GM12878 (cell line): ENCODE measurements at regions of chr18 and their contacts with region 1.

Region 1: GRCh38 chr18:78542204-78542603 is 437.4 kb upstream of the SALL3 start:
- DNase-seq: no peak
- ATAC-seq: no peak
- H3K4me3 ChIP-seq: no peak overlapping the region
- H3K27ac ChIP-seq: no peak overlapping the region
- H3K4me1 ChIP-seq: no peaks in the 10 kb centered on the region
- H3K27me3 ChIP-seq: no peaks in the 10 kb centered on the region
- CTCF ChIP-seq: no peak
- EP300 ChIP-seq: no peak
- POLR2A ChIP-seq: no peak
- RAD21 ChIP-seq: no peak

Region 2: DNA sequence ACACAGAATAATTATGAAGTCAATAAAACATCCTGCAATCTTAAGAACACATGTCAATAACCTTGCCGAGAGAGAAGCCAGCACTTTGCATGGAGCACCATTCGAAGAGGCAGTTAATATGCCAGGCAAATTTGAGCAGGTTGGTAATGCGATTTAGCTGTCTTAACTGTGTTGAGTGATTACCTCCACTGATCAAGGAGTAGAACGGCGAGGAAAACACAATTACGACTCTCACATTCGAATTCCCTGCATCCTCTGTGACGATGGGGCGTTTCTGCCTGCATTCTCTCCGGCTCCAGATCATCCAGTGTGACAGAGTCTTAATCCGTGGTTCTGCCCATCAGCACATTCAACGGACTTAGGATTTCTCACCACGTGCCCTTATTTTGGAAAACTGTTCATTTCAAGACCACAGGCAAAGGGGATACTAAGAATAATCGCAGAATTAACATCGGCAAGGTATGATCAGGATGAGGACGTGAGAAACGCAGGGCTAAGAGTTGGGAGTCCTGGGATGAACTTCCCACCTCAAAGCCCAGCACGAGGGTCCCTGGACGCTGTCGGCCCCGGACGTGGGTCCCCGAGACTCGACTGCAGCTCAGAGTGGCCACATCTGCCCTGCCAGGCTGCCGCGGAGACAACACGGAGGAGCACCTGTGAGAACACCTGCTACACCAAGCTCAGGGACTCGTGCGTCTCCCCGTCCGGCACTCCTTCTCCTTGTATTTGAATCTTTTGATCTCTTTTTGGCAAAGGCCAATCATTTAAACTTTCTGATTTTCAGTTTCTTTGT is 61.7 kb before region 1 on chr18:
- CTCF ChIA-PET with region 1: no interaction called
- POLR2A ChIA-PET with region 1: no interaction called
- RAD21 ChIA-PET with region 1: no interaction called
- SMC1A ChIA-PET with region 1: no interaction called
- in situ Hi-C with region 1: no loop called
- intact Hi-C with region 1: no loop called
- DNase-seq: no peak
- ATAC-seq: no peak
- H3K4me3 ChIP-seq: no peak overlapping the region
- H3K27ac ChIP-seq: no peak overlapping the region
- H3K4me1 ChIP-seq: no peaks in the 10 kb centered on the region
- H3K27me3 ChIP-seq: no peaks in the 10 kb centered on the region
- CTCF ChIP-seq: no peak
- EP300 ChIP-seq: no peak
- POLR2A ChIP-seq: no peak
- RAD21 ChIP-seq: no peak

Region 3: DNA sequence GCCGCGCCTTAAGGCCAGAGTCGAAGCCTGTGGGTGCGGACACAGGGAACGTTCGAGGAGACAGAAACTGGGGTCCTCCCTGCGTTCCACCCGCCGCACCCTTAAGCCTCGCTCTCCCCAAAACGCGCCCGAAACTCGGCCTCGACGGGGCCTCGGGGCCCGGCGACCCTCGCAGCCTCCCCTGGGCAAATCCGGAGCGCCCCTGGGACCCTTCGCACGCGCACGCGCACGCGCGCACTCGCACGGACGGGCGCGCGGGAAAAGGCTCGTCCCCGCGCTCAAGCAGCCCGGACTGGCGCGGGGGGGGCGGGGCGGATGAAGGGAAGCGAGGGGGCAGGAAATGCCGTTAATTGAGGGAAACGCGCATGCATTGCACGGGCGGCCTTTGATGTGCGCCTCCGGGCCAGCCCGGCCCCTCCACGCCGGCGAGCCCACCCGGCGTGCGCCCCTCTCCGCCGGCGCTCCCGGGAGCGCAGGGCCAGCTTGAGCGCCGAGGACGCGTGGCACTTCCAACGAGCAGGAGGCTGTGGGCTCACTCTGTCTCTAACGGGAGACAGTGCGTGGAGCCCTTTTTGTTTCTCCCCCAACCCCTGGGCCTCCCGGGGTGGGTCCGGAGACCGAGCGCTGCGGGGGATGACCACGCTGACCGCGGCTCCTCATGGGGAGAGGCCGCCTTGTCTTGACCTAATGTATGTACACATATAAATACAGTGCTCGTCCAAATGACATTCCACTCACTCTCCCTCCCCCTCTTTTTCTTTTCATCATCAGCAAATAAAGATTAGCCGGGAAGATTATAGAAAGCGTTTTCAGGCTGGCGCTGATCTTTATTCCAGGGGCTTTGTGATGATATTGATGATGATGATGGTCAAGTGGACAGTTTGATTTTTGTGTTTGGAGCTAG is 432.2 kb after region 1 on chr18:
- CTCF ChIA-PET with region 1: no interaction called
- POLR2A ChIA-PET with region 1: no interaction called
- RAD21 ChIA-PET with region 1: no interaction called
- SMC1A ChIA-PET with region 1: no interaction called
- in situ Hi-C with region 1: loop called (anchors 25 kb)
- intact Hi-C with region 1: no loop called
- DNase-seq: no peak
- ATAC-seq: no peak
- H3K4me3 ChIP-seq: no peak overlapping the region
- H3K27ac ChIP-seq: no peak overlapping the region
- H3K4me1 ChIP-seq: no peaks in the 10 kb centered on the region
- H3K27me3 ChIP-seq: no peaks in the 10 kb centered on the region; a peak in 1 of 4 replicates
- CTCF ChIP-seq: no peak
- EP300 ChIP-seq: no peak
- POLR2A ChIP-seq: no peak
- RAD21 ChIP-seq: no peak